CD4-positive, alpha-beta T cell (primary cell): ENCODE measurements at regions of chr2 and their contacts with region 1.

Region 1: DNA sequence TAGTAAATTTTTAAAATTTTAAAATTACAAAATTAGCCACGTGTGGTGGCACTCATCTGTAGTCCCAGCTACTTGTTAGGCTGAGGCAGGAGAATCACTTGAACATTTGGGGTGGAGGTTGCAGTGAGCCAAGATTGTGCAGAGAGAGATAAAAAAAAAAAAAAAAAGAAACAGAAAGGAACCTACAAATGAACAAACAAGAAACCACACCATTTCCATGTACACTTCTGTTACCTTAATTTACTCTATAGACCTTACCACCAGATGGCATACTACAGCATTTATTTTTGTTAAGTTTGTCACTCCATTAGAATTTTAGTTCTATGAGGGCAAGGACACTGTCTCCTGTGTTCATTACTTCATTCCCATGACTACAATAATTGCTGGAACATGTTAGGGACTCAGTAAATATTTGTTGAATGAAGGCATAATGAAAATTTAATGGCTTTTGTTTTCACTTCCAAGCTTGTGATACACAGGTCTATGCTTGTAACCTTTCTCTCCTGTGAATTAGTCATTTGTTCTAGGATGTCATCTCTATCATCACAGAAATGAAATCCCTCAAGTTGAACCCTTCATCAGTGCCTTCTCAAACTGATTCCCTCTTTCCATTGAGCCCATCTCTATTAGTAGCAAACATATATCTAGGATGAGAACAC is 76.0 kb downstream of the ARHGAP15 start:
- DNase-seq: peak in 4 of 14 experiments; percentile 15 to 72 (median 69)
- ATAC-seq: peak; percentile 90
- H3K4me3 ChIP-seq: no peak overlapping the region
- H3K4me3 Mint-ChIP-seq: no peak overlapping the region
- H3K27ac ChIP-seq: no peak overlapping the region
- H3K27ac Mint-ChIP-seq: peak overlapping the region; percentile 40
- H3K4me1 ChIP-seq: peaks cover 14% of the 10 kb centered on the region
- H3K4me1 Mint-ChIP-seq: peaks cover 67% of the 10 kb centered on the region
- H3K27me3 ChIP-seq: no peaks in the 10 kb centered on the region
- H3K27me3 Mint-ChIP-seq: no peaks in the 10 kb centered on the region
- CTCF ChIP-seq: peak; percentile 56

Region 2: DNA sequence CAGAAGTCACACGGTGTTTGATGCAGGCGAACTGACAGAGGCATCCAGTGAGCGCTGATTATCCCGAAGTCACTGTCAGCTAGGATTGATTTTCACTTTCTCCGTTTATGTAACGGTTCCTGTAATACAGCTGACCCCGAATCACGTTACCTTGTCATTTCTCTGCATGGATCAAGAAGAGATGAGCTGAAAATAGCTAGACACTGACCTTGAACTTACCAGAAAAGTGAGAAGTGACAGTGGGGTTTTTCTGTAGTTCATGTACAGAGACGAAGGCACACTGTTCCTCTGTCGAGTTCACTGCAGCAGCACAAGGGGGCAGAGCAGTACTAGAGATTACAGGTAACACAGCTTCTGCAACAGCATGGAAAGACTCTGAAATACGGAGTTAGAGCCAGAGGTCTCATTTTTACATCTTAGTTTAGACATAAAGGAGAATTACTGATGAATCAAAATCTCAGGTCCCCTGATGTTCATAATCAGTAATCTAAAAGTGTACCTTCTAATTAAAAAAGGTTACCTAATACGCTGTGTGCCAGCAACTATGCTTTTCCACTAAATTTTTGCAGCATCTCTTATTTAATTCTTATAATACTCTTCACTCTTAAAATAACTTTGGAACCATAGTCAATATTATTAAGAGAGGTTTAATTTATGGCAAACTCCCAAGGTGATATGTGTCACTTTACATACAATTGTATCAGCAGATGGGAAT is 43.0 kb before region 1 on chr2:
- CTCF ChIA-PET with region 1: interaction called, 6 read pairs
- POLR2A ChIA-PET with region 1: interaction called, 3 read pairs
- intact Hi-C with region 1: loop called in 1 of 2 experiments (anchors 1 kb)
- DNase-seq: peak; percentile 24 to 86 (median 55)
- ATAC-seq: peak; percentile 99
- H3K4me3 ChIP-seq: no peak overlapping the region
- H3K4me3 Mint-ChIP-seq: peak overlapping the region; percentile 2
- H3K27ac ChIP-seq: no peak overlapping the region
- H3K27ac Mint-ChIP-seq: peak overlapping the region; percentile 84
- H3K4me1 ChIP-seq: peaks cover 13% of the 10 kb centered on the region
- H3K4me1 Mint-ChIP-seq: peaks cover 95% of the 10 kb centered on the region
- H3K27me3 ChIP-seq: no peaks in the 10 kb centered on the region
- H3K27me3 Mint-ChIP-seq: no peaks in the 10 kb centered on the region
- CTCF ChIP-seq: peak; percentile 82